Caco-2 (cell line): ENCODE measurements at regions of chr12 and their contacts with region 1.

Region 1: DNA sequence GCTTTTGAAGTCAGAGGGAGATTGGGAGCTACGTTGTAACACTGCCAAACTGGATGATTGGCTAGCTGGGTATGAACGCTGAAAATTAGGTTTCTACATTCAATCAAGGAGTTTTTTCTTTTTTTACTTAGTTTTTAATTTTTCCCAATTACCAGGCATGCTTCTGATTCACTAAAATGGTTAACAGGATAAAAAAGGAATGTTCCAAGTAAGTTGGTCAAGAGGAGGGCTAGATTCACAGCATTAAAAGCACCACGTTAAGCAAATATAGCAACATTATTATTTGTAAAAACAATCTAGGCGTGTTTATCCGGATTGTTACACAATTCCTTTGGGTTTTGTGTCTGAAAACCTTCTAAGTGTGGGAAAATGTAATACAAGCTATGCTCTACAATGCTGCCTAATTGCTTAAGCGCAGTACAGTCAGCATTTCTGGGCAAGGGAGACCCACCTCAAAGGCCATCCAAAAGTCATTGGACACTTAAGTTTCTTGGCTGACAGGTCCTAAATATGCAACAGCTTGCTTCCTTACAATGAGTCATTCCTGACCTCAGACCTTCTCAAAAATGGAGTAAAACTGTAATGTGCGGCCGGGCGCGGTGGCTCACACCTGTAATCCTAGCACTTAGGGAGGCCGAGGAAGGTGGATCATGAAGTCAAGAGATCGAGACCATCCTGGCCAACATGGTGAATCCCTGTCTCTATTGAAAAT is 1.2 kb downstream of the RPLP0 start:
- DNase-seq: no peak
- H3K4me3 ChIP-seq: peak overlapping the region; percentile 81
- H3K4me3 Mint-ChIP-seq: peak overlapping the region; percentile 86
- H3K27ac Mint-ChIP-seq: peak overlapping the region; percentile 96
- H3K4me1 ChIP-seq: peaks cover 35% of the 10 kb centered on the region
- H3K4me1 Mint-ChIP-seq: peaks cover 13% of the 10 kb centered on the region
- H3K27me3 ChIP-seq: no peaks in the 10 kb centered on the region
- H3K27me3 Mint-ChIP-seq: no peaks in the 10 kb centered on the region
- CTCF ChIP-seq: no peak

Region 2: GRCh38 chr12:120086801-120087621 is 112.7 kb before region 1 on chr12:
- CTCF ChIA-PET with region 1: no interaction called
- POLR2A ChIA-PET with region 1: interaction called, 10 read pairs
- intact Hi-C with region 1: no loop called
- DNase-seq: peak; percentile 98 to 99
- H3K4me3 ChIP-seq: peak overlapping the region; percentile 38
- H3K4me3 Mint-ChIP-seq: peak overlapping the region; percentile 76
- H3K27ac Mint-ChIP-seq: peak overlapping the region; percentile 93
- H3K4me1 ChIP-seq: peaks cover 4% of the 10 kb centered on the region; the same call in 1 of the 2 replicates
- H3K4me1 Mint-ChIP-seq: no peaks in the 10 kb centered on the region
- H3K27me3 ChIP-seq: no peaks in the 10 kb centered on the region
- H3K27me3 Mint-ChIP-seq: no peaks in the 10 kb centered on the region
- CTCF ChIP-seq: peak; percentile 94 to 95

Region 3: GRCh38 chr12:120181991-120182631 is 17.6 kb before region 1 on chr12:
- CTCF ChIA-PET with region 1: interaction called, 14 read pairs
- POLR2A ChIA-PET with region 1: interaction called, 42 read pairs
- intact Hi-C with region 1: no loop called
- DNase-seq: peak; percentile 75 to 76
- H3K4me3 ChIP-seq: no peak overlapping the region
- H3K4me3 Mint-ChIP-seq: no peak overlapping the region
- H3K27ac Mint-ChIP-seq: peak overlapping the region; percentile 59
- H3K4me1 ChIP-seq: peaks cover 12% of the 10 kb centered on the region
- H3K4me1 Mint-ChIP-seq: peaks cover 13% of the 10 kb centered on the region
- H3K27me3 ChIP-seq: no peaks in the 10 kb centered on the region
- H3K27me3 Mint-ChIP-seq: no peaks in the 10 kb centered on the region
- CTCF ChIP-seq: no peak

Region 4: GRCh38 chr12:120234643-120235368 is 35.1 kb after region 1 on chr12:
- CTCF ChIA-PET with region 1: interaction called, 15 read pairs
- POLR2A ChIA-PET with region 1: interaction called, 187 read pairs
- intact Hi-C with region 1: no loop called
- DNase-seq: peak; percentile 82 to 83
- H3K4me3 ChIP-seq: no peak overlapping the region
- H3K4me3 Mint-ChIP-seq: no peak overlapping the region
- H3K27ac Mint-ChIP-seq: peak overlapping the region; percentile 71
- H3K4me1 ChIP-seq: peaks cover 82% of the 10 kb centered on the region
- H3K4me1 Mint-ChIP-seq: peaks cover 63% of the 10 kb centered on the region
- H3K27me3 ChIP-seq: no peaks in the 10 kb centered on the region
- H3K27me3 Mint-ChIP-seq: no peaks in the 10 kb centered on the region
- CTCF ChIP-seq: peak; percentile 51 to 69

Region 5: GRCh38 chr12:120292661-120293531 is 93.1 kb after region 1 on chr12 and contains the start of gene RNU4-1:
- CTCF ChIA-PET with region 1: interaction called, 3 read pairs
- POLR2A ChIA-PET with region 1: interaction called, 70 read pairs
- intact Hi-C with region 1: no loop called
- DNase-seq: peak; percentile 89 to 93
- H3K4me3 ChIP-seq: peak within 1 kb of the TSS; percentile 48
- H3K4me3 Mint-ChIP-seq: peak within 1 kb of the TSS; percentile 14
- H3K27ac Mint-ChIP-seq: no peak within 1 kb of the TSS
- H3K4me1 ChIP-seq: peaks cover 7% of the 10 kb centered on the region
- H3K4me1 Mint-ChIP-seq: no peaks in the 10 kb centered on the region
- H3K27me3 ChIP-seq: no peaks in the 10 kb centered on the region
- H3K27me3 Mint-ChIP-seq: no peaks in the 10 kb centered on the region
- CTCF ChIP-seq: no peak
- total RNA-seq, gene RNU4-1: 3,380 and 3,645 TPM in 2 replicates